Right lobe of liver (tissue), 6 donors: ENCODE measurements at regions of chr15 and their contacts with region 1.

Region 1: DNA sequence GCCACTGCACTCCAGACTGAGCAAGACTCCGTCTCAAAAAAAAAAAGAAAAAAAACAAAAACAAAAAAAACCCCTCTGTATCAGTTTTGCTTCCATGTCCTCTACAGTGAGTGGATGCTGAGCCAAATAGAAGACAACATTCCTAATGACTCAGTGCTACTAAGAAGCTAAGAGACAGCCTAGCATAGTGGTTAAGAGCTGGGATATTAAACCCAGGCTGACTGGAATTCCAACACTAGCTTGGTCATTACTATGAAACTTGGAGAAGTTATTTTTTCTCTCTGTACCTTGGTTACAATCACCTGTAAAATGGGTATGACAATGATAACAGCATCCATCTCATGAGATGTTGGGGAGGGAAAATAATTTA is 60.9 kb upstream of the PYGO1 start:
- DNase-seq: no peak
- ATAC-seq: no peak
- H3K4me3 ChIP-seq: no peak overlapping the region
- H3K27ac ChIP-seq: no peak overlapping the region
- H3K4me1 ChIP-seq: no peaks in the 10 kb centered on the region
- H3K27me3 ChIP-seq: no peaks in the 10 kb centered on the region
- CTCF ChIP-seq: no peak
- POLR2A ChIP-seq: no peak

Region 2: GRCh38 chr15:55846116-55846707 is 197.2 kb after region 1 on chr15:
- intact Hi-C with region 1: loop called in 1 of 2 experiments (anchors 10 kb)
- DNase-seq: no peak
- ATAC-seq: peak; percentile 77 to 88 (median 82)
- H3K4me3 ChIP-seq: no peak overlapping the region
- H3K27ac ChIP-seq: no peak overlapping the region
- H3K4me1 ChIP-seq: no peaks in the 10 kb centered on the region
- H3K27me3 ChIP-seq: no peaks in the 10 kb centered on the region
- CTCF ChIP-seq: peak; percentile 72 to 91 (median 84)
- POLR2A ChIP-seq: no peak

Region 3: DNA sequence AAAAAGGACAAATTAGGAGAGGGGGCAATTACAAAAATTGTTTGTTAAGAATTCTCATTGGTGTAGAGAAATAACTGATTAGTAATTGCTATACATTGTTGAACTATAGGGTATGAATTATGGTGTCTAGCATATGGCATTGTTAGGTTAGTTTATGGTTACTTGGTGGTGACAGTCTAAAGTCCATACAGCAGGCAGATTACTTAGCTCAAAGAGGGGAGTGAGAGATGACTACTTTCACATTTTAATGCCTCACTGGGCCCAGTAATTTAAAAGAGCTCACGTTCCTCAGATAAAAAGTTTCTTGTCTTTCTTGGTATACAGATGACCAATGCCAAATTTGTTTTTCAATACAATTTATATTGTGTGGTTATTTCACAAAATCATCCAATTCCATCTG is 456.8 kb after region 1 on chr15:
- intact Hi-C with region 1: no loop called
- DNase-seq: no peak
- ATAC-seq: no peak
- H3K4me3 ChIP-seq: no peak overlapping the region
- H3K27ac ChIP-seq: no peak overlapping the region
- H3K4me1 ChIP-seq: no peaks in the 10 kb centered on the region
- H3K27me3 ChIP-seq: no peaks in the 10 kb centered on the region
- CTCF ChIP-seq: no peak
- POLR2A ChIP-seq: no peak